AG04450 (cell line): ENCODE measurements at regions of chr11 and their contacts with region 1.

Region 1: GRCh38 chr11:17978553-17979287 is 34.1 kb downstream of the SERGEF start:
- DNase-seq: no peak
- H3K4me3 ChIP-seq: no peak overlapping the region
- H3K27ac ChIP-seq: no peak overlapping the region
- H3K27me3 ChIP-seq: no peaks in the 10 kb centered on the region
- CTCF ChIP-seq: peak; percentile 92

Region 2: DNA sequence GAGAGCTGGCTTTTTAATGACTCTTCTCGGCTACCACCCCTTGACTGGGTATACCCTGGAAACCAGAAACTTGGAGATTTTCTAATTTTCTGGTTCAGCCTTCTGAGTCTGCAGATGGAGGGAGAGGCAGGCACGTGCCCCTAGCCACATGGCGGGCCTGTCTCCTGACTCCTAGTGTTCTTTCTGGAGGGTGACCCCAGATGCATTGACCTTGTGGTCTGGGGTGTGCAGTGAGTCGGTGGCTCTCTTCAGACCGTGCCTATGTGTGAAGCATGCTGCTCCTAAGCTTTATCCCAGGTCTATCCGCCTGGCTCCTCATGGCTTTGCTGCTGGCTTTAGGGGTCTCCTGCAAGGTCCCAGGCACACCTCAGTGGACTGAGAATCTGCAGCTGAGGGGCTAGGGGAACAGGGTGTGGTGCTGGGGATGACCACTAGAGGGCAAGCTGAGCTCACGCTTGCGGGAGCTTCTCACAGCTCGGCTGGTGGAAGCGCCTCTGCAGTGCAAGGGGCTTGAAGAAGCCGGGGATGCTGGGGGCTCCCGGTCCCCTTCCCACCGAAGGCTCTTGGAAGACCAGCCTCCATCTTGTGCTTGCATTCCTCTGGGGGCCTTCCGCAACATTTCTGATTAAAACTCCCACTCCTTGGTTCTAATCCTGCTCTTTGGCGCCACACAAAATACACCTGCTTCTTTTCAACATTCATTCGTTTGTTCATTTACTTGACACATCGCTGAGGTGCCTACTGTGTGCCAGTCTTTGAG is 379.8 kb before region 1 on chr11:
- CTCF ChIA-PET with region 1: interaction called, 25 read pairs
- POLR2A ChIA-PET with region 1: no interaction called
- DNase-seq: peak; percentile 26
- H3K4me3 ChIP-seq: no peak overlapping the region
- H3K27ac ChIP-seq: no peak overlapping the region
- H3K27me3 ChIP-seq: peaks cover 4% of the 10 kb centered on the region
- CTCF ChIP-seq: peak; percentile 98

Region 3: DNA sequence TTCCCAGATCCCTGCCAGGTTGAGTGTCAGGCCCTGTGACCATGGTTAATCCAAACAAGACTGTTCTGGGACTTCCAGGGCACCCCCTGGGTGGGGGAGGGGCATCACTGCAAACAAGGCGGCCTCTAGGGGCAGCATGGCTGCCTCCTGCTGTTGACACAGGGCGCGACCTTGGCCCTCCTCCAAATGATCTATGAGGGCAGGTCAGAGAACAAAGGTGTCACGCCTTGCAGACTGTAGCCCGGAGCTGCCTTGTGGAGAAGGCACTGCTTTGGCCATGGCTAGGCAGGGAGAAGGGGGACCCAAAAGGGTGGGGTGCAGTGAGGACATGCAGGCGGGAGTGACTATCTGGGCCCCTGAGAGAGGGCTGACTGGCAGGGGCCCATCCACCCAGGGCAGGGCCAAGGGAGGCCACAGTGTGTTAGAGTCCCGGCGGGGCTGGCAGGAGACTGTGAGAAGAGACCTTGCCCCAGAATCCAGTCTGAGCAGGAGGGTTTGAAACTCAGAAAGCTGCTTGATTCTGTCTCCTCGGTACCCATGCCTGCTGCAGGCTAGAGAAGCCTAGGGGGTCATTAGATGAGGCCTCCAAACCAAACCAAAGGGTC is 208.6 kb before region 1 on chr11:
- CTCF ChIA-PET with region 1: interaction called, 38 read pairs
- POLR2A ChIA-PET with region 1: no interaction called
- DNase-seq: no peak
- H3K4me3 ChIP-seq: no peak overlapping the region
- H3K27ac ChIP-seq: no peak overlapping the region
- H3K27me3 ChIP-seq: peaks cover 6% of the 10 kb centered on the region
- CTCF ChIP-seq: no peak

Region 4: GRCh38 chr11:17907046-17907445 is 71.7 kb before region 1 on chr11:
- CTCF ChIA-PET with region 1: no interaction called
- POLR2A ChIA-PET with region 1: no interaction called
- DNase-seq: no peak
- H3K4me3 ChIP-seq: no peak overlapping the region
- H3K27ac ChIP-seq: no peak overlapping the region
- H3K27me3 ChIP-seq: no peaks in the 10 kb centered on the region
- CTCF ChIP-seq: no peak

Region 5: GRCh38 chr11:17960091-17960490 is 18.6 kb before region 1 on chr11:
- CTCF ChIA-PET with region 1: interaction called, 59 read pairs
- POLR2A ChIA-PET with region 1: interaction called, 3 read pairs
- DNase-seq: no peak
- H3K4me3 ChIP-seq: no peak overlapping the region
- H3K27ac ChIP-seq: no peak overlapping the region
- H3K27me3 ChIP-seq: no peaks in the 10 kb centered on the region
- CTCF ChIP-seq: no peak

Region 6: GRCh38 chr11:17991783-17992433 is 13.2 kb after region 1 on chr11:
- CTCF ChIA-PET with region 1: interaction called, 111 read pairs
- POLR2A ChIA-PET with region 1: no interaction called
- DNase-seq: peak; percentile 36
- H3K4me3 ChIP-seq: no peak overlapping the region
- H3K27ac ChIP-seq: no peak overlapping the region
- H3K27me3 ChIP-seq: no peaks in the 10 kb centered on the region
- CTCF ChIP-seq: peak; percentile 92